Endothelial cell of umbilical vein (primary cell): ENCODE measurements at regions of chr4 and their contacts with region 1.

Region 1: GRCh38 chr4:100093091-100093866 is 97.0 kb downstream of the DDIT4L start:
- DNase-seq: peak; percentile 89
- H3K4me3 ChIP-seq: no peak overlapping the region
- H3K27ac ChIP-seq: peak overlapping the region; percentile 53
- H3K4me1 ChIP-seq: peaks cover 3% of the 10 kb centered on the region
- H3K27me3 ChIP-seq: no peaks in the 10 kb centered on the region
- CTCF ChIP-seq: peak; percentile 76 to 85
- POLR2A ChIP-seq: no peak

Region 2: GRCh38 chr4:100082852-100083251 is 10.4 kb before region 1 on chr4:
- CTCF ChIA-PET with region 1: interaction called, 10 read pairs
- POLR2A ChIA-PET with region 1: no interaction called
- dilution Hi-C with region 1: no loop called
- intact Hi-C with region 1: no loop called
- DNase-seq: no peak
- H3K4me3 ChIP-seq: no peak overlapping the region
- H3K27ac ChIP-seq: no peak overlapping the region
- H3K4me1 ChIP-seq: no peaks in the 10 kb centered on the region
- H3K27me3 ChIP-seq: peaks cover 0 to 2% of the 10 kb centered on the region in 2 experiments
- CTCF ChIP-seq: no peak
- POLR2A ChIP-seq: no peak

Region 3: DNA sequence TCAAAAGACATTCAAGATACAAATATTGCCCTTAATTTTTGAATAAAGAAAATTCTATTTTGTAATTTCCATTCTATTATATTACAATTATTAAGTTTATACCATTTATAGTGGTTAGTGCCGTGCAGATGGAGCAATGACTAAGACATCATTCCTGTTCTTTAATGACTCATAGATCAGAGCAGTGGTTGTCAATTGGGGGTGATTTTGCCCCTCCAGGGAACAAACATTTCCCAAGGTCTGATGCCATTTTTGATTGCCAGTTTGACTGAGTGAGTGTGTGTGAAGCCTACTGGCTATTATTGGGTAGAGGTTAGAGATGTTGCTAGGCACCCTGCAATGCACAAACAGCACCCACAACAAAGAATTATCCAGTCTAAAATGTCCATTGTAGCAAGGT is 194.9 kb after region 1 on chr4:
- CTCF ChIA-PET with region 1: no interaction called
- POLR2A ChIA-PET with region 1: no interaction called
- dilution Hi-C with region 1: no loop called
- intact Hi-C with region 1: no loop called
- DNase-seq: no peak
- H3K4me3 ChIP-seq: no peak overlapping the region
- H3K27ac ChIP-seq: no peak overlapping the region
- H3K4me1 ChIP-seq: peaks cover 31% of the 10 kb centered on the region
- H3K27me3 ChIP-seq: no peaks in the 10 kb centered on the region
- CTCF ChIP-seq: no peak
- POLR2A ChIP-seq: no peak

Region 4: DNA sequence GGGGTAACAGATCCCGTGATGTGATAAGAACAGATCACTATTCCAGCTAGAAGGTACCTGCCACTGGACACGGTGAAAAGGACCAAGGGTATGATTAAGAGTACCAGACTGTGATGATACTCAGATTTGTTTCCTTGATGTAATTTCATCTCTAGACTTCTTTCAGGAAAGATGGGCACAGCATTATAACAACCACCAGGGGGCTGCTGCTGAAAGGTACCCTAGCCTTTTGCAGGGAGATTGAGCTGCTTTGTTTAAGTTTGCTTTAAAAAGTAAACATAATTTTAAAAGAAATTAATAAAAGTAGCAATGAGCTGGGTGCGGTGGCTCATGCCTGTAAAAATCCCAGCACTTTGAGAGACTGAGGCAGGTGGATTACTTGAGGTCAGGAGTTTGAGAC is 279.2 kb after region 1 on chr4:
- CTCF ChIA-PET with region 1: interaction called, 11 read pairs
- POLR2A ChIA-PET with region 1: no interaction called
- dilution Hi-C with region 1: no loop called
- intact Hi-C with region 1: no loop called
- DNase-seq: no peak
- H3K4me3 ChIP-seq: no peak overlapping the region
- H3K27ac ChIP-seq: no peak overlapping the region
- H3K4me1 ChIP-seq: no peaks in the 10 kb centered on the region
- H3K27me3 ChIP-seq: no peaks in the 10 kb centered on the region
- CTCF ChIP-seq: peak; percentile 54 to 55
- POLR2A ChIP-seq: no peak

Region 5: GRCh38 chr4:100517864-100518341 is 424.6 kb after region 1 on chr4 and contains the start of gene EMCN:
- CTCF ChIA-PET with region 1: interaction called, 3 read pairs
- POLR2A ChIA-PET with region 1: no interaction called
- dilution Hi-C with region 1: no loop called
- intact Hi-C with region 1: loop called (anchors 10 kb)
- DNase-seq: peak; percentile 90
- H3K4me3 ChIP-seq: peak within 1 kb of the TSS; percentile 39 to 99 (median 54)
- H3K27ac ChIP-seq: peak within 1 kb of the TSS; percentile 70
- H3K4me1 ChIP-seq: peaks cover 41% of the 10 kb centered on the region
- H3K27me3 ChIP-seq: no peaks in the 10 kb centered on the region
- CTCF ChIP-seq: no peak
- POLR2A ChIP-seq: peak; percentile 56
- total RNA-seq, gene EMCN: 76.2 and 97.3 TPM in 2 replicates

Region 6: GRCh38 chr4:101730291-101731117 is 1637.2 kb after region 1 on chr4:
- CTCF ChIA-PET with region 1: interaction called, 25 read pairs
- POLR2A ChIA-PET with region 1: no interaction called
- dilution Hi-C with region 1: no loop called
- intact Hi-C with region 1: loop called (anchors 1 kb)
- DNase-seq: peak; percentile 78
- H3K4me3 ChIP-seq: no peak overlapping the region
- H3K27ac ChIP-seq: no peak overlapping the region
- H3K4me1 ChIP-seq: no peaks in the 10 kb centered on the region
- H3K27me3 ChIP-seq: no peaks in the 10 kb centered on the region
- CTCF ChIP-seq: peak; percentile 58 to 63
- POLR2A ChIP-seq: no peak